Endothelial cell of umbilical vein (primary cell): ENCODE measurements at regions of chr13 and their contacts with region 1.

Region 1: GRCh38 chr13:104006625-104007075 is 940.4 kb upstream of the SLC10A2 start:
- DNase-seq: no peak
- H3K4me3 ChIP-seq: no peak overlapping the region
- H3K27ac ChIP-seq: no peak overlapping the region
- H3K4me1 ChIP-seq: peaks cover 28% of the 10 kb centered on the region
- H3K27me3 ChIP-seq: no peaks in the 10 kb centered on the region
- CTCF ChIP-seq: no peak
- POLR2A ChIP-seq: no peak

Region 2: DNA sequence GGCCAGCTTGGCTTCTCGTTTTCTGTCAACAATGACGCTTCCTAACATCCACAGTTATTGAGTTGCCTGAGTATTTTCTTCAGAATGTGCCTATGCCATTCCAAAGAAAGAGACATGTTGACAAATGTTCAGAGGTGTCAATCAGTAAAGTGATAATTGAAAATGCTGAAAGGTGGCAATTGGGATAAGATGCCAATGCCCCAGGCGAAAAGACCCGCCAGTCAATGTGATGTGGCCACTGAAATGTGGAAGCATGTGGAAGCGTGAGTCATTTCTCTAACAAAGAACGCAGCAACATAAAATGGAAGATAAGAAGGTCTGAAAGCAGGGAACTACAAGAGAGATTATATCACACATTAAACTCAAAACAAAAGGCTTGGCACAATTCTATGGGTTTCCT is 58.2 kb before region 1 on chr13:
- CTCF ChIA-PET with region 1: no interaction called
- POLR2A ChIA-PET with region 1: no interaction called
- dilution Hi-C with region 1: no loop called
- intact Hi-C with region 1: loop called (anchors 1 kb)
- DNase-seq: peak; percentile 92
- H3K4me3 ChIP-seq: no peak overlapping the region
- H3K27ac ChIP-seq: peak overlapping the region; percentile 84
- H3K4me1 ChIP-seq: peaks cover 48% of the 10 kb centered on the region
- H3K27me3 ChIP-seq: no peaks in the 10 kb centered on the region
- CTCF ChIP-seq: no peak
- POLR2A ChIP-seq: peak; percentile 38

Region 3: DNA sequence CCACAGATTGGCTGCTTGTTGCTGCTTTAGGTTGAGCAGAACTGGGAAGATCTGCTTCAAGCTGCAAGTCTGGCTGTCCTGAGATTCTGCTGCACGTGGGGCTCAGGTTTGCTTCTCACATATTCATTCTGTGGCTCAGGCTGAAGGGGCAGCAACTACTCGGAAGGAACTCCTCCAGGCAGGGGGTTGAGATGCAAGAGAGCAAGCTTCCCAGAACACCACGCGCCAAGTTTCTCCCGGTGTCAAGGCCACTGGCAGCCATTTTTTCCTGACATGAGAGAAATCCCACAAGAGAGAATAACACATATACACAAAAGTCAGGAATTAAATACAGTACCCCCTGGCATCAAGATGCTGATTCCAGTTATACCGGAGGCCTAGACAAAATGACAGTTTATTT is 52.8 kb before region 1 on chr13:
- CTCF ChIA-PET with region 1: no interaction called
- POLR2A ChIA-PET with region 1: no interaction called
- dilution Hi-C with region 1: no loop called
- intact Hi-C with region 1: loop called (anchors 1 kb)
- DNase-seq: no peak
- H3K4me3 ChIP-seq: no peak overlapping the region
- H3K27ac ChIP-seq: no peak overlapping the region
- H3K4me1 ChIP-seq: peaks cover 29% of the 10 kb centered on the region
- H3K27me3 ChIP-seq: no peaks in the 10 kb centered on the region
- CTCF ChIP-seq: no peak
- POLR2A ChIP-seq: no peak

Region 4: DNA sequence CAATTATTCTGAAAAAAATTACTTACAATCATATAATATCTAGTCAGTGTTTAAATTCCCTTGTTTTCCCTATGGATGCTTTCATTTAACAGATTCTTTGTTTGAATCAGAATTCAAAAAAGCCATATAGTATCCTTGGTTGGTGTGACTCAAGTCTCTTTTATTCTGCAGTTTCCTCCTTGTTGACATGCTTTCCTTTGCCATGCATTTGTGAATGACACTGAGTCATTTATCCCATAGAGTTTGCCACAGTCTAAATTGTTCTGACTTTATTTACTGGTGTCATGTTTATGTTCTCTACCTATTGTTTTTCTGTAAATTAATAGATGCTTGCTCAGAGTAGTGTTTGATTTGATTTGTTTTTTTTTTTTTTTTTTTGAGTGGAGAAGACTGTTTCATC is 46.6 kb before region 1 on chr13:
- CTCF ChIA-PET with region 1: interaction called, 3 read pairs
- POLR2A ChIA-PET with region 1: no interaction called
- dilution Hi-C with region 1: no loop called
- intact Hi-C with region 1: loop called (anchors 2 kb)
- DNase-seq: peak; percentile 59
- H3K4me3 ChIP-seq: no peak overlapping the region
- H3K27ac ChIP-seq: no peak overlapping the region
- H3K4me1 ChIP-seq: peaks cover 13% of the 10 kb centered on the region
- H3K27me3 ChIP-seq: no peaks in the 10 kb centered on the region
- CTCF ChIP-seq: no peak
- POLR2A ChIP-seq: no peak

Region 5: DNA sequence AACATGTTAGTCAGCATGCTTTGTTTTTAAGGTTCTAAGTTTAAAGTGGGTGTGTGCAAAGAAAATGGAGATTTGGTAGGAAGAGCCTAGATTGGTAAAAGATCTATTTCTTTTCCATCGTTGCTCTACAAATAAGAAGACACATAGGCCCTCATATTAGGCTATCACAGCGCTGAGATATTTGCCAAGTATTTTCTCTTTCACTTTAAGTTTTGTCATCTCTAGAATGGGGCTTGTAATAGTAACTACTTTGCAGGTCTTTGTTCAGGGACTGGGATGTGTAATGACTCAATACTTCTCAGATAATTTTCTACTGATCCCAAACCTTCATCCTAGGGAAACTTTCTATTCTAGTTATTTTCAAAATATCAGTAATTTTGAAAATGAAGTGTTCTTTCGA is 22.7 kb before region 1 on chr13:
- CTCF ChIA-PET with region 1: no interaction called
- POLR2A ChIA-PET with region 1: no interaction called
- dilution Hi-C with region 1: no loop called
- intact Hi-C with region 1: no loop called
- DNase-seq: no peak
- H3K4me3 ChIP-seq: no peak overlapping the region
- H3K27ac ChIP-seq: no peak overlapping the region
- H3K4me1 ChIP-seq: no peaks in the 10 kb centered on the region
- H3K27me3 ChIP-seq: no peaks in the 10 kb centered on the region
- CTCF ChIP-seq: no peak
- POLR2A ChIP-seq: no peak

Region 6: DNA sequence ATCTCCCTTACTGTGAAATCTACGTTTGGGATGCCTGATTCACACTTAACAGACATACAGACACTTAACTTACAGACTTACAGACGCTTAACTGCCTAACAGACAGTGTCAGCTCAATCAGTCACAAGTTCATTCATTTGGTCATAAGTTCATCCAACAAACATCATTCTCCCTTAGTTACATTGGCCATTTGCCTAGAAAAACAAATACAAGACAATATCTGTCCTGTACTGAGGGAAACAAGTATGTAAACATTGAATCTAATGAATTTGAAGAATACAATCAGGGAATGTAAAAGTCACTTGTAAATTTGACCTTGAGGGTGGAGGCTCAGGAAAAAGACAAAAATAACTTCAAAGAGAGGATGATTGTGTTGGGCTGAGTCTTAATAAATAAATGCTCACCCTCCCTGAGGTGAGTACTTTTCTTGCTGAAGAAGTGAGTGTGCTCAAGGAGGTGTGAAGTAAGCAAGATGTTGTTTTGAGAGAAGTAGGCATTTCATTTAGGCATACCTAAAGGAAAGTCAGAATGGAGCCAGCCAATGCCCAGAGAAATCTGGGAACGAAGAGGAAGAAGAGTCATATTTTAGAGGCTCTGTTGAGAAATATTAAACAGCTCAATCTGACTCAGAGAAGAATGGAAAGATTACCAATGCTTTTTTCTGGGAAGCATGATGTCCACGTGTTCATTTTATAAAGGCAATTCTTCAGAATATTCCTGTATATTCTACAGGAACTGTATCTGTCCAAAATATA is 17.9 kb after region 1 on chr13:
- CTCF ChIA-PET with region 1: no interaction called
- POLR2A ChIA-PET with region 1: no interaction called
- dilution Hi-C with region 1: no loop called
- intact Hi-C with region 1: loop called (anchors 1 kb)
- DNase-seq: peak; percentile 76
- H3K4me3 ChIP-seq: no peak overlapping the region
- H3K27ac ChIP-seq: peak overlapping the region; percentile 65
- H3K4me1 ChIP-seq: peaks cover 14% of the 10 kb centered on the region
- H3K27me3 ChIP-seq: no peaks in the 10 kb centered on the region
- CTCF ChIP-seq: no peak
- POLR2A ChIP-seq: no peak

Region 7: DNA sequence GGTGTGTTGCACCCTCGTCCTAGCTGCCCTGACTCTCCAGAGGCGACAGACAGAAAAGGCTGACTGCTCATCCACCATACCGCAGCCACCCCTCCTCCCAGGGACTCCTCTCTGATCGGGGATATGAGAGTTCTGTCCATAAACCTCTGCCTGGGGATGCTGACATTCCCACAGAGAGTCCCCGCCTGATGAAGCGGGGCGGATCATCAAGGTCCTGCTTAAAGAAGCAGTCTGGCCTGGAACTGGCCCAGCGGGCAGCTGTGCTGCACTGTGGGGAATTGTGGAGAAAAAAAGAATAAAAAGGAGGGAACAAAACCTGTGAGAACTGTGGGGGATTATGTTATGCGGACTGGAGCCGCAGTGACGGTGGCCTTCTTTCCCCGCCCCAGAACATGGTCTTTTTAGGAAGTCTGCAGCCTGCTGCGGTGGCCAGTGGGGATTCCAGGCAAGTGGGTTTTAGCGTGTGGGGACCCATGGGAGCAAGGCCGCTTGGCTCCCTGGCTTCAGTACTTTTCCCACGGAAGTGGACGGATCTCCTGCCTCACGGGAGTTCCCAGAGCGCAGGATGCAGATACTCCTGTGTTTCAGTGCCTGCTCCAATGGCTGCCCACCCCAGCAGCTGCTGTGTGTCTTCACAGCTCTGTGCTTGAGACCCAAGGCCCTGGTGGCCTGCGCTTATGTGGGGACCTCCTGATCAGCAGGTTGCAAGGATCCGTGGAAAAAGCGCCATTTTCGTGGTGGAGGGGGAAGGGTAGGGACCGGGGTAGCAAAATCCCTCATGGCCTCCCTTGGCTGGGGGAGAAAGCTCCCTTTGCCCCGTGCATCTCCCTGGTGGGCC is 515.8 kb after region 1 on chr13:
- CTCF ChIA-PET with region 1: no interaction called
- POLR2A ChIA-PET with region 1: no interaction called
- dilution Hi-C with region 1: no loop called
- intact Hi-C with region 1: no loop called
- DNase-seq: no peak
- H3K4me3 ChIP-seq: no peak overlapping the region
- H3K27ac ChIP-seq: no peak overlapping the region
- H3K4me1 ChIP-seq: no peaks in the 10 kb centered on the region
- H3K27me3 ChIP-seq: no peaks in the 10 kb centered on the region
- CTCF ChIP-seq: no peak
- POLR2A ChIP-seq: no peak

Region 8: DNA sequence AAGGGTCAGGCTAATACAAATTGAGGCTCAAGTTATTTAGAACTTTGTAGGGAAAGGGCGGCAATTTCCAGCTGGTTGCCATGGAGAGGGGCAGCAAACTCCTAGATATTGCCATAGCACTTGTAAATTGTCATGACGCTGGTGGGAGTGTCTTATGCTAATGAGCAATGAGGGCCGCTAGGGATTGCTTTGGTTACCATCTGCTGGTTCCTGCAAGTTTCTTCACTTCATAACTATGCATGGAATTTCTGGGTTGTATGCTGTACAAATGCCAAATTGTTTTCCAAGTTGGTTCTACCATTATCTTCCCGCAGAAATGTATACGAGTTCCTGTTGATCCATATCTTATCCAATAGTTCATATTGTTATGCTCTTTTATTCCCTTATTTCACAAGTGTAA is 1189.4 kb after region 1 on chr13:
- CTCF ChIA-PET with region 1: no interaction called
- POLR2A ChIA-PET with region 1: no interaction called
- dilution Hi-C with region 1: no loop called
- intact Hi-C with region 1: loop called (anchors 5 kb)
- DNase-seq: peak; percentile 88
- H3K4me3 ChIP-seq: no peak overlapping the region
- H3K27ac ChIP-seq: peak overlapping the region; percentile 69
- H3K4me1 ChIP-seq: peaks cover 9% of the 10 kb centered on the region
- H3K27me3 ChIP-seq: no peaks in the 10 kb centered on the region
- CTCF ChIP-seq: no peak
- POLR2A ChIP-seq: no peak

Region 9: DNA sequence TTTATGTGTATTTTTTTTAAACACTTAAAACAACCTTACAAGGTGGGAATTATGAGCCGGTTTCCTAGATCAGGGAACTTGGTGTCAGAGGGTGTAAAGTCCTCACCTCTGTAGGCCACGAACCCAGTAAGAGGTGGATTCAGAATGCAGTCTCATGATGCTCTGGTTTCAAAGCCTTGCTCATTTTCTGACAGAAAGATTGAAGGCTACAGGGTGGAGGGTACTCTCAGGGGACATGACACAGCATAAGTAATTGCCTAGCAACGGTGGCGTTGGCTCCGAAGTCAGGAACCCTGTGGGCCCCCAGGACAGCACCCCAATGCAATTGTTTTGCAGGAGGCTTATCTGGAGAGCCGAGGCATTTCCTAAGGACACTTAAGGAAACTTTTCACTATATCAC is 1734.1 kb after region 1 on chr13:
- CTCF ChIA-PET with region 1: no interaction called
- POLR2A ChIA-PET with region 1: no interaction called
- dilution Hi-C with region 1: no loop called
- intact Hi-C with region 1: no loop called
- DNase-seq: no peak
- H3K4me3 ChIP-seq: no peak overlapping the region
- H3K27ac ChIP-seq: no peak overlapping the region
- H3K4me1 ChIP-seq: no peaks in the 10 kb centered on the region
- H3K27me3 ChIP-seq: no peaks in the 10 kb centered on the region
- CTCF ChIP-seq: no peak
- POLR2A ChIP-seq: no peak